Heart left ventricle (tissue), 16 donors: ENCODE measurements at regions of chr13 and their contacts with region 1.

Region 1: DNA sequence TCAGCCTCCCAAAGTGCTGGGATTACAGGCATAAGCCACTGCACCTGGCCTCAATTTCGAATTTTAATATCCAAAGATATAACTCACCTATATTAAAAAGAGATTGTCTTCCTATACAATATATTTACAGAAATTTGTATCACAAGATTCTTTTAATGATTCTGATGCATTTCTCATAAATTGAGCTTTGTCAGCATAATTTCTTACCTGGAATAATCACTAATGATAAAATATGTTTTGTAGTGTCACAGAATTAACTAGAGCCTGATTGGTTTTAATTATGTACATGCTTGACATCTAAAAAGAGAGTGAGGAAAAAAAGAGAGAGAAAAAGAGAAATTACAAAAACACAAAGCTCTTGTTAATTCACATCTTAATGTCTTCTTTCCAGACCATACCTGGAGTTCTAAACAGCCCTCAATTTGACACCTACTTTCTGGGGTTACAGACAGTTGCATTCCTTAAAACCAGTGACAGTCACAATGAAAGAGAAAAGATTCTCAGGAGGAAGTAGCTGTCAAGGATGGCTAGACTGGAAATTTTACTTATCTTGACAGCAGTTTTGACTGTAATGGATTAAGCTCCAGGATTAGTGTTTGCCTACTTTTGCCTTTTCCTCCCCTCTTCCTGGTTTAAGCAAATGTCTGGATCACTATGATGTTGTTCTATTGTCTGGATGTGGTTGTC is 214.4 kb downstream of the SPRY2 start:
- DNase-seq: no peak
- ATAC-seq: no peak
- H3K4me3 ChIP-seq: no peak overlapping the region
- H3K27ac ChIP-seq: no peak overlapping the region
- H3K4me1 ChIP-seq: peaks cover 0 to 19% (median 5%) of the 10 kb centered on the region in 12 donors
- H3K27me3 ChIP-seq: no peaks in the 10 kb centered on the region
- CTCF ChIP-seq: no peak
- POLR2A ChIP-seq: no peak

Region 2: GRCh38 chr13:80048802-80049201 is 77.7 kb before region 1 on chr13:
- intact Hi-C with region 1: loop called in 4 of 10 experiments (anchors 2 to 10 kb)
- DNase-seq: peak; percentile 86 to 93 (median 90)
- ATAC-seq: peak; percentile 98 to 99 (median 98)
- H3K4me3 ChIP-seq: no peak overlapping the region
- H3K27ac ChIP-seq: peak overlapping the region in 11 of 12 donors; percentile 6 to 80 (median 45)
- H3K4me1 ChIP-seq: peaks cover 0 to 35% (median 28%) of the 10 kb centered on the region in 12 donors
- H3K27me3 ChIP-seq: no peaks in the 10 kb centered on the region
- CTCF ChIP-seq: no peak
- POLR2A ChIP-seq: no peak